ENCODE measurements at regions of chr10 and their contacts with region 1.

Region 1: DNA sequence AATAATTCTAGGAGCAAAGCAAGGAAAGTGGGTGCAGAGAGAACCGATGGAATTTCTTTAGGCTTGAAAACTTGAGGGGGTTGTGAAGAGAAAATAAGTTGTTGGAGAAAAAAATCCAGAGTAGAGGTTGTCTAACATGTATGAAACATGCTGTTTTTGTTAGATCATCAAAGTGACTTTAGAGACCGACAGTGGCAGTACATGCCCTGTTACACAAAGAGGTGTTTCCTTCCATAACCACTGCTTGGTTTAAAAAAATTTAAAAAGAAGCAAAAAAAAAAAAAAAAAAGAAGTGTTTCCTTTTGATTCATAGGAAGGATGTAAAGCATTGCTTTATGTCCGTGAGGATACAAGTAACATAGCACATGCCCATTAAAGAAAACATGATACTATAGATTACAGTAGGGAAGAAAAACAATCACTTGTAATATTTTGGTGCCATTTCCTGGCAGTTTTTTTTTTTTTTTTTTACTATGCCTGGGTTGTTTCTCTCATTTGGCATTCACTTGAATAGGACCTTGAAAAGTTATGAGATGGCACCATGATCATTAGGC is 6.1 kb downstream of the ENTPD1 start:
- DNase-seq: peak in 4 of 9 donors; percentile 12 to 35 (median 18)
- ATAC-seq: no peak
- H3K4me3 ChIP-seq: no peak overlapping the region
- H3K4me3 Mint-ChIP-seq: peak overlapping the region in 3 of 10 donors; percentile 15 to 37 (median 26)
- H3K27ac ChIP-seq: no peak overlapping the region
- H3K27ac Mint-ChIP-seq: peak overlapping the region in 3 of 9 donors; percentile 4 to 84 (median 60)
- H3K4me1 ChIP-seq: peaks cover 4 to 6% of the 10 kb centered on the region in 2 donors
- H3K4me1 Mint-ChIP-seq: peaks cover 8 to 36% (median 10%) of the 10 kb centered on the region in 7 donors
- H3K27me3 ChIP-seq: no peaks in the 10 kb centered on the region
- H3K27me3 Mint-ChIP-seq: peaks cover 0 to 6% (median 3%) of the 10 kb centered on the region in 5 donors

Region 2: DNA sequence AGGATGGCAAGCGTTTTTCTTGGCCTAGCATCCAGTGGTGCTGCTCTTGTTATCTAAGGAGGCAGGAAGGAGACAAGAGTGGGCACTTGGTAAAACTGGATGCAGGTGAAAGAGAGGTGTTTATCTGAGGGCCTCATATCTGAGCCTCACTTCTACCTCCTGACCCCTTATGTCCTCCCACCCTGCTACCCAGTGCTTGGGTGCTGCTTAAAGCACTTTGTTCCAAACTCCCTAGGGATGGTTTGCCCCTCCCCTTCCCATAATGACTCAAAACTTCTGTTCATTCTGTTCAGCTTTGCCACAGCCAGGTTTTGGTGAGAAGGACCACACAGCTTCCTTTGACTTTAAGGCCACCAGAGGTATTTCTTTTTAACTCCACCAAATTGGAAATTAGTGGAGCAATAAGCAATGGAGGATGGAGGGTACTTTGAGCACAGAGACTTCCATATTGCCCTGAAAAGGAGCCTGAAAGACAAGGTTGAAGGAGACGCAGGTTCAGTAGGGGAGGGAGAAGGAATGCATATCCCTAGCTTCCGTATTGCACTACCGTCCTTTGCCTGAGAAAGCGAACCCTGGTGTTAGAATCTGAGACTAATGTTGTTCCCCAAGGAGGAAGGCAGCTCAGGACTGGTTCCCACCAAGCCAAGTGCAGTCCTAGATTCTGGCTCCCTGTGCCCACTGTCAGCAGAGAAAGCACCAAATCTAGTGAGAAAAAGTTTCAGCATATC is 24.1 kb after region 1 on chr10:
- CTCF ChIA-PET with region 1: no interaction called
- POLR2A ChIA-PET with region 1: no interaction called
- intact Hi-C with region 1: loop called in 1 of 2 experiments (anchors 2 kb)
- DNase-seq: no peak
- ATAC-seq: no peak
- H3K4me3 ChIP-seq: no peak overlapping the region
- H3K4me3 Mint-ChIP-seq: peak overlapping the region in 1 of 10 donors; percentile 47
- H3K27ac ChIP-seq: no peak overlapping the region
- H3K27ac Mint-ChIP-seq: peak overlapping the region in 1 of 9 donors; percentile 80
- H3K4me1 ChIP-seq: no peaks in the 10 kb centered on the region
- H3K4me1 Mint-ChIP-seq: peaks cover 0 to 66% (median 0%) of the 10 kb centered on the region in 7 donors
- H3K27me3 ChIP-seq: no peaks in the 10 kb centered on the region
- H3K27me3 Mint-ChIP-seq: peaks cover under 1 to 18% (median 9%) of the 10 kb centered on the region in 5 donors

Region 3: GRCh38 chr10:95864906-95865813 is 103.1 kb after region 1 on chr10:
- CTCF ChIA-PET with region 1: no interaction called
- POLR2A ChIA-PET with region 1: no interaction called
- intact Hi-C with region 1: no loop called
- DNase-seq: peak in 7 of 9 donors; percentile 10 to 40 (median 24)
- ATAC-seq: peak; percentile 88
- H3K4me3 ChIP-seq: no peak overlapping the region
- H3K4me3 Mint-ChIP-seq: peak overlapping the region in 1 of 10 donors; percentile 24
- H3K27ac ChIP-seq: no peak overlapping the region
- H3K27ac Mint-ChIP-seq: peak overlapping the region in 1 of 9 donors; percentile 83
- H3K4me1 ChIP-seq: no peaks in the 10 kb centered on the region
- H3K4me1 Mint-ChIP-seq: peaks cover 0 to 37% (median 0%) of the 10 kb centered on the region in 7 donors
- H3K27me3 ChIP-seq: no peaks in the 10 kb centered on the region
- H3K27me3 Mint-ChIP-seq: peaks cover 0 to 3% (median 0%) of the 10 kb centered on the region in 5 donors

Measured in naive thymus-derived CD4-positive, alpha-beta T cell (primary cell).